WTC11 (cell line): ENCODE measurements at regions of chr19 and their contacts with region 1.

Region 1: DNA sequence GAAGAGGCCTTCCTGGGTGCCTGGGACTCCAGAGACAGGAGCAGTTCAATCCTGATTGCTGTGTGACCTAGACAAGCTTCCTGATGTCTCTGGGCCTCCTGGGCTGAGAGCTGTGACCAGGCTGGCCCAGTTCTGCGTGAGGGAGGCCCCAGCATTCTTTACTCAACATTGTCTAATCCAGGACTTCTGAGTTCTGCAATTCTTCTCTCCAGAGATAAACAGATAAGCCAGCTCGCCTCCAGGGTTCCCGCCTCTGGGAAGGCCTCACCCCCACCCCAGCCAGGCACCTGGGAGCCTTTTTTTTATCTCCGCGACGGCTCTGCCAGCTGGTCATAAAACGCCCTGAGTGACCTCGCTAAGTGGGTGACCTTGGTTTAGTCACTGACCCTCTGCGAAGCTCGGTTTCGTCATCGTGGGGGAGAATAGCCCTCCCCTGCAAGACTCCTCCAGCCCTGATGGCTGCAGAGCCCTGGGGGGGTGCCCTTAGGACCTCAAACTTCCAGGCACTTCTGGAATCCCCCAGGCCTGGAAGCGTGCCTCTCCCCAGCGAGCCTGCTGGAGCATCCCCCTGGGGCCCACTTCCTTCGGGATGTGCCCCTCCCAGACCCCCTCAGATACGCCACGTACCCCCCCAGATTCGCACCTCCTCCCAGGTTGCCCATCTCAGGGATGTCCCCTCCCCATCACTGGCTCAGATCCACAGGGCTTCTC is 1.9 kb downstream of the SULT2B1 start:
- DNase-seq: peak; percentile 51
- ATAC-seq: peak; percentile 31
- H3K4me3 Mint-ChIP-seq: peak overlapping the region; percentile 34
- H3K27ac Mint-ChIP-seq: peak overlapping the region; percentile 86
- H3K4me1 Mint-ChIP-seq: peaks cover 25% of the 10 kb centered on the region
- H3K27me3 Mint-ChIP-seq: no peaks in the 10 kb centered on the region
- CTCF ChIP-seq: no peak

Region 2: GRCh38 chr19:48501496-48502350 is 52.1 kb before region 1 on chr19:
- CTCF ChIA-PET with region 1: interaction called, 15 read pairs
- POLR2A ChIA-PET with region 1: interaction called, 6 read pairs
- DNase-seq: peak; percentile 100
- ATAC-seq: peak; percentile 87
- H3K4me3 Mint-ChIP-seq: peak overlapping the region; percentile 67
- H3K27ac Mint-ChIP-seq: peak overlapping the region; percentile 98
- H3K4me1 Mint-ChIP-seq: peaks cover 15% of the 10 kb centered on the region
- H3K27me3 Mint-ChIP-seq: peaks cover 6% of the 10 kb centered on the region
- CTCF ChIP-seq: no peak

Region 3: GRCh38 chr19:48660854-48661731 is 107.3 kb after region 1 on chr19:
- CTCF ChIA-PET with region 1: no interaction called
- POLR2A ChIA-PET with region 1: no interaction called
- DNase-seq: peak; percentile 88
- ATAC-seq: peak; percentile 82
- H3K4me3 Mint-ChIP-seq: no peak overlapping the region
- H3K27ac Mint-ChIP-seq: no peak overlapping the region
- H3K4me1 Mint-ChIP-seq: peaks cover 8% of the 10 kb centered on the region
- H3K27me3 Mint-ChIP-seq: peaks cover 23% of the 10 kb centered on the region
- CTCF ChIP-seq: no peak